ENCODE measurements at regions of chr1 and their contacts with region 1.

Region 1: DNA sequence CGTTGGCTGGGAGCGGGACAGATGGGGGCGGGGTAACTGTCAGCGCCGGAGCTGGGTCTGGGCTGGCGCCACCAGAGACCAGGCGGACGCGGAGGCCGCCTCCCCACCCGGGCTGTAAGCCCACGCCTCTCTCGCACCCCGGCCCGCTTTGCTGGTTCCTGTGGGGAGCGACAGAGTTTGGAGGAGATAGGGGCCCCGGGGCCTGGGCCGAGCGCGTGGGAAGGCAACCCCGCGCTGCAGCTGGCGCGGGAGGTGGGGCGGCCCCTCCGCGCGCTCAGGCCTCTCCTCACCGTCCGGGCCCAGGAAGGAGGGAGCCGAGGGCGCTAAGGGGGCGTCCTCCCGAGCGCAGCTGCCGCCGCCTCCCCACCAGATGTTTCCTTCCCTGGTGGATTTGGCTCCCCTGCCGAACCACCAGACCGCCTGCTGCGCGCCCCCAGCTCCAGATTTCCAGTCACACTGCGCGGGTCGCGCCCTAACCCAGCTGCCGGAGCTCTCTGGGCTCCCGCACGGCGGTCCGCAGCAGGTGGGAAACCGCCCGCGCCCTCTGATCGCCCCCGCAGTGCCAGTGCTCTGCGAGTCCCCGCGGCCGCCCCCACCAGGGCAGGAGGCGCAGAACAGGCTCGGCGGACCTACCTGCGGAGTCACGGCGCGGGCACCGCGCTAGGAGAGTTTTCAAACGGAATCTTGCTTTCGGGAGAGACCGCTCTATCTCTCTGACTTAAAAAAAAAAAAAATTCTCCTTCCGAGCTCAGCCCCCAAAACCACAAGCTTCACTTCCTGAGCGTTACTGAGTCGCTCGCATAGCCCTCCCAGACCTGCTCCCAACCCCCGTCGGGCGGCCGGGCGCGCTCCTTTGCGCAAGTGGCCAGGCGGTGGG is 1.1 kb downstream of the GFI1 start:
- DNase-seq: peak; percentile 92
- H3K4me3 Mint-ChIP-seq: peak overlapping the region; percentile 86
- H3K27ac Mint-ChIP-seq: peak overlapping the region; percentile 94
- H3K4me1 Mint-ChIP-seq: peaks cover 49% of the 10 kb centered on the region
- H3K27me3 Mint-ChIP-seq: peaks cover 5% of the 10 kb centered on the region

Region 2: GRCh38 chr1:92310185-92310597 is 175.4 kb before region 1 on chr1:
- CTCF ChIA-PET with region 1: interaction called, 52 read pairs
- DNase-seq: no peak
- H3K4me3 Mint-ChIP-seq: no peak overlapping the region
- H3K27ac Mint-ChIP-seq: no peak overlapping the region
- H3K4me1 Mint-ChIP-seq: peaks cover 31% of the 10 kb centered on the region
- H3K27me3 Mint-ChIP-seq: no peaks in the 10 kb centered on the region

Region 3: DNA sequence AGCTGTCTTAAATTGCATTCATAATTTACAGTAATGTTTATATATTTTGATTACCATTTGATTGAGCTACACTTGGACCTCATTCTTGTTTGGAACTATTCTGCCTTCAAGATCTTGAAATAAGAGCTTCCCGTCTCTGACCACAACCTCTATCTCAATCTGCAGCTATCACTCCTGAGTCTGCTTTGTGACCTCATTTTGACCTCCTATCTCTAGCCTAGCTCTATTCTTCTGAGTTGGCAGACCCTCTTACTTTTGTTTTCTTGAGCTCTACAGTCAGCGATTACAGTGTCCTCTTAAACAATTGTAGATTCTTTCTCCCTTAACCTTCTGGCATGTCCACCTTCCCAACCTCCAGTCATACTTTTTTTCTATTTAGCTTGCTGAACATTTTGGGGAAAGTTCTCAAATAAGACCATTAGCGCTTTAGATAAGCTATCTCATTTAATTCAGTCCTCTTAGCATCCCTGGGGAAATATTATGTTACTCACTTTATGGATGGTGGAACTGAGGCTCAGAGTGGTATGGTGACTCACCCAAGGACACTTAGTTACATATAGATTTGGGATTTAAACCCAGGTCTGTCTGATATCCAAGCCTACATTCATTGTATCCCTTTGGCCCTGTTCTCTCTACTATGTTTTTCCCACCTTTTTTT is 167.7 kb before region 1 on chr1:
- CTCF ChIA-PET with region 1: interaction called, 24 read pairs
- DNase-seq: no peak
- H3K4me3 Mint-ChIP-seq: peak overlapping the region; percentile 11
- H3K27ac Mint-ChIP-seq: peak overlapping the region; percentile 72
- H3K4me1 Mint-ChIP-seq: peaks cover 62% of the 10 kb centered on the region
- H3K27me3 Mint-ChIP-seq: no peaks in the 10 kb centered on the region

Region 4: DNA sequence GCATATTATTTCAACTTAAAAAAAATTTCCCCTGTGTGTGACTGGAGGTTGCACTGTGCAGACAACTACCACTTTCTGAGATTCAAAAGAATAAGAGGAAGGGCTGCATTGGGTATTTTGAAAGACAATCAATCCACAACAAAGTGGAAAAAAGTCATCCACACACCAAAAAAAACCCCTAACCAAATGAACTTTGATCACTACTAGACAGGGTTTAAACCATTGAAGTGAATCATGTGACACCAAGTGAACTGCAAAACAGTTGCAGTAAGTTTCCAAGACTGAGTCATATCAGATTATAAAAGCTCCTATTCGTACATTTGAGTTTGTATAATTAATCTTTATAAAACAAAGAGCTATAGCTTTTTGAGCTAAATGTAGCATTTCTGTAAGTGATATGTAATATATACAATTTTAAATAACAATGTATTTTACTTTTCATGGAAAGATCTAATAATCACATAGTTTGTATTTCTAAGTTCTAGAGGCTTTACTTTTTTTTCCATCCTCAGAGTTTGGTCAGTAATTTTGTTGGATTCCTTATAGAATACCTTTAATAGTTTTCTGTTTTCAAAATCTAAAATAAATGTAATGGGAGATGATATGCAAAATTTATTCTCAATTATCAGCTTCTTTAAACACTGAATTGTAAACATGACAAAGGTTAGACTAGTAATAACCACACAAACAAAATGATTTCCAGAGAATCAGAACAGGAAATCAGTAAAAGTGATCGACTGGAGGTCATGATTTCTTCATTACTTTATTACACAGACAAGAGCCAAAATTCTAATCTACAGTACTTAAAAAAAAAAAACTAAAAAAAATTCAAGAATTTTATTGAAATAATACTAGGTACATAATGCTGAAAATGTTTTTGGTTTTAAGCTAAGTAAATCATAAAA is 51.6 kb after region 1 on chr1:
- CTCF ChIA-PET with region 1: interaction called, 32 read pairs
- DNase-seq: peak; percentile 25
- H3K4me3 Mint-ChIP-seq: peak overlapping the region; percentile 62
- H3K27ac Mint-ChIP-seq: peak overlapping the region; percentile 93
- H3K4me1 Mint-ChIP-seq: peaks cover 80% of the 10 kb centered on the region
- H3K27me3 Mint-ChIP-seq: no peaks in the 10 kb centered on the region

Region 5: DNA sequence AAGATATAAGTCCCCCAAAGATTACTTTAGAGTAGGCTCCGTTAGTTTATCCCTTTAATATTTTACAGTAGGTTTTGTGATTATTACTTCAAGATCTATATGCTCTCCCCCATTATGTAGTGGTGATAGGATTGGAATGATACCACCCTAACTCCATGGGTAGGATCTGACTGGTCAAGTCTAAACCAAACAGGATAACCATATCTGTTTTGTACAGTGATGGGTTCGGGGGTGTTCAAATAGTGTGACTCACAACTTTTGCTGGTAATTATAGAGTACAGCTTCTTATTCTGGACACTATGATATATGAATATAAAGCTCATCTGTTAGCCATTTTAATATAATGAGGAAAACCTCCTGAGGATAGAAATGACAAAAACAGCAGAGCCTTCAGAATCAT is 86.9 kb after region 1 on chr1:
- CTCF ChIA-PET with region 1: interaction called, 14 read pairs
- DNase-seq: no peak
- H3K4me3 Mint-ChIP-seq: no peak overlapping the region
- H3K27ac Mint-ChIP-seq: no peak overlapping the region
- H3K4me1 Mint-ChIP-seq: peaks cover 54% of the 10 kb centered on the region
- H3K27me3 Mint-ChIP-seq: no peaks in the 10 kb centered on the region

Region 6: GRCh38 chr1:92587445-92587844 is 101.8 kb after region 1 on chr1:
- CTCF ChIA-PET with region 1: interaction called, 11 read pairs
- DNase-seq: no peak
- H3K4me3 Mint-ChIP-seq: no peak overlapping the region
- H3K27ac Mint-ChIP-seq: no peak overlapping the region
- H3K4me1 Mint-ChIP-seq: peaks cover 43% of the 10 kb centered on the region
- H3K27me3 Mint-ChIP-seq: no peaks in the 10 kb centered on the region

Region 7: DNA sequence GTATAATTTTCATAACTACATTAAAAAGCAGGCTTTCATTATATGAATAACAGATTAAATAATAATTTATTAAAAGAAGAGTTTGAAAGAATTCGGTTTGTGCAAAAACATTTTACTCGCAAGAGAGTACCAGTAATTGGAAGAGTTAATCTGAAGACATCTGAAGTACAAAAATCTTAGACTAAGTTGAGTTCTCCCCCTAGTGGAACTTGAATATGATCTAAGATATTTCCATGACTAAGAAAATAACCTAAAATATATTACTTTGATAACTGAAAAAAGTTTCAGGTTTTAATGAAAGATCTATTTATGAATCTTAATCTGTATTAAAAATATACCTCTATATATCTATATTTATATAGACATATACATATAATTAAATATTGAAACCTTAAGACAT is 113.6 kb after region 1 on chr1:
- CTCF ChIA-PET with region 1: interaction called, 11 read pairs
- DNase-seq: no peak
- H3K4me3 Mint-ChIP-seq: no peak overlapping the region
- H3K27ac Mint-ChIP-seq: no peak overlapping the region
- H3K4me1 Mint-ChIP-seq: peaks cover 23% of the 10 kb centered on the region
- H3K27me3 Mint-ChIP-seq: no peaks in the 10 kb centered on the region

Measured in activated naive CD4-positive, alpha-beta T cell treated with anti-CD3 and anti-CD28 coated beads, Interleukin-2, amount 10 ng/mL, durations not matched to agents 7 days and 5 days (primary cell).